ENCODE measurements at regions of chr15 and their contacts with region 1.

Region 1: GRCh38 chr15:80695104-80695910 is at the start of gene ABHD17C:
- DNase-seq: peak; percentile 64
- ATAC-seq: peak; percentile 63
- H3K4me3 ChIP-seq: peak within 1 kb of the TSS; percentile 96
- H3K27ac ChIP-seq: peak within 1 kb of the TSS; percentile 76
- H3K4me1 ChIP-seq: peaks cover 68% of the 10 kb centered on the region
- H3K27me3 ChIP-seq: no peaks in the 10 kb centered on the region
- CTCF ChIP-seq: no peak
- total RNA-seq, gene ABHD17C: 10.3 and 14.2 TPM in 2 replicates

Region 2: GRCh38 chr15:80588801-80589200 is 106.5 kb before region 1 on chr15:
- CTCF ChIA-PET with region 1: no interaction called
- POLR2A ChIA-PET with region 1: no interaction called
- intact Hi-C with region 1: loop called (anchors 5 kb)
- DNase-seq: peak; percentile 93
- ATAC-seq: peak; percentile 88
- H3K4me3 ChIP-seq: no peak overlapping the region
- H3K27ac ChIP-seq: peak overlapping the region; percentile 97
- H3K4me1 ChIP-seq: peaks cover 45% of the 10 kb centered on the region
- H3K27me3 ChIP-seq: no peaks in the 10 kb centered on the region
- CTCF ChIP-seq: no peak

Region 3: DNA sequence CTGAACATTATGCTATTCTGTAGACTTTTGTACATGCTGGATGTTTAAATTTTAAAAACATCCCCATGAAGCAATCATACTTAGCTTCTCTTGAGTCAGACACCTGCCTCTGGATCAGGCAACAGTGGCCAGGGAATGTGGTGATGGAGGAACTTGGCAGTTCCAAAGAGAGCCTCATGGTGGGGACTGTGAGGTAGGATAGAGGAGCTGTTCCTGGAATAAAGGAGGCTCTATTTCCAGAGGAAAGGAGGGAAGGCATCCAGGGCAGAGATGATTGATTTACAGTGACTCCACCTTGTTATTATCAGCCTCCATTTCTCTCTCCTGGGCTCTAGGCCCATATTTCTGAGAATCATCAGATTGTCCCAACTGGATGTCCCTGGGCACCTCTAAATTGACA is 35.2 kb before region 1 on chr15:
- CTCF ChIA-PET with region 1: interaction called, 5 read pairs
- POLR2A ChIA-PET with region 1: no interaction called
- intact Hi-C with region 1: loop called (anchors 5 kb)
- DNase-seq: peak; percentile 79
- ATAC-seq: peak; percentile 98
- H3K4me3 ChIP-seq: no peak overlapping the region
- H3K27ac ChIP-seq: 0 out of 2 replicates have a peak overlapping the region, but pooled peaks have one; percentile 12
- H3K4me1 ChIP-seq: peaks cover 18% of the 10 kb centered on the region
- H3K27me3 ChIP-seq: no peaks in the 10 kb centered on the region
- CTCF ChIP-seq: peak; percentile 81

Region 4: GRCh38 chr15:80743187-80743833 is 48.0 kb after region 1 on chr15:
- CTCF ChIA-PET with region 1: no interaction called
- POLR2A ChIA-PET with region 1: no interaction called
- intact Hi-C with region 1: loop called (anchors 2 kb)
- DNase-seq: peak; percentile 86
- ATAC-seq: peak; percentile 97
- H3K4me3 ChIP-seq: no peak overlapping the region
- H3K27ac ChIP-seq: peak overlapping the region; percentile 91
- H3K4me1 ChIP-seq: peaks cover 38% of the 10 kb centered on the region
- H3K27me3 ChIP-seq: no peaks in the 10 kb centered on the region
- CTCF ChIP-seq: no peak

Region 5: GRCh38 chr15:80970018-80970658 is 274.8 kb after region 1 on chr15:
- CTCF ChIA-PET with region 1: no interaction called
- POLR2A ChIA-PET with region 1: no interaction called
- intact Hi-C with region 1: no loop called
- DNase-seq: peak; percentile 78
- ATAC-seq: peak; percentile 78
- H3K4me3 ChIP-seq: peak overlapping the region; percentile 5; the same call in 1 of the 2 replicates
- H3K27ac ChIP-seq: peak overlapping the region; percentile 29
- H3K4me1 ChIP-seq: peaks cover 19% of the 10 kb centered on the region
- H3K27me3 ChIP-seq: no peaks in the 10 kb centered on the region
- CTCF ChIP-seq: peak; percentile 87